HEK293 (cell line): ENCODE measurements at regions of chr6 and their contacts with region 1.

Region 1: DNA sequence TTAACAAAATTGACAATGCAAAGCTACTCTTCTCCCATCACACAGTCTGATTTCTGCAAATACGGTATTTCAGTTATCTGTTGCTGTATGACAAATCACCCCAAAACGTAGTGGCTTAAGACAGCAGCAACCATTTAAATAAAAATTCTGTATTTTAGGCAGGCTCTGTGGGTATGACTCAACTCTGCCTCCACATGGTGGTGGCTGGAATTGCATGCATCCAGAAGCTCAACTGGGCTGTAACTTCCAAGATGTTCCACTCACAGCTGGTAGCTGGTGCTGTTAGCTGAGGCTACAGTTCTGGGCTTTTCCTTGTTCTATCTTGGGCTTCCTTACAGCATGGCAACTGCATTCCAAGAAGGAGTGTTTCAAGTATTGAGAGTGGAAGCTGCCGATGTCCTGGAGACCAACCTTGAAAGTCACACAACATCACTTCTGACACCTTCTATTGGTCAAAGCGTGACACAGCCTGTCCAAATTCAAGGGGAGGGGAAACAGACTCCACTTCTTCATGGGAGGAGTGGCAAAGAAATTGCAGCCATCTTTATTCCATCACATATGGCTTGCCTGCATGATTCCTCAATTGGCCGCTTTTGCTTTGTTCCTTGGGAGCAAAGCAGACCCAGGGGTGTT is 39.7 kb upstream of the TULP1 start:
- H3K4me3 ChIP-seq: no peak overlapping the region
- H3K27ac ChIP-seq: no peak overlapping the region
- H3K4me1 ChIP-seq: no peaks in the 10 kb centered on the region
- CTCF ChIP-seq: peak; percentile 45

Region 2: DNA sequence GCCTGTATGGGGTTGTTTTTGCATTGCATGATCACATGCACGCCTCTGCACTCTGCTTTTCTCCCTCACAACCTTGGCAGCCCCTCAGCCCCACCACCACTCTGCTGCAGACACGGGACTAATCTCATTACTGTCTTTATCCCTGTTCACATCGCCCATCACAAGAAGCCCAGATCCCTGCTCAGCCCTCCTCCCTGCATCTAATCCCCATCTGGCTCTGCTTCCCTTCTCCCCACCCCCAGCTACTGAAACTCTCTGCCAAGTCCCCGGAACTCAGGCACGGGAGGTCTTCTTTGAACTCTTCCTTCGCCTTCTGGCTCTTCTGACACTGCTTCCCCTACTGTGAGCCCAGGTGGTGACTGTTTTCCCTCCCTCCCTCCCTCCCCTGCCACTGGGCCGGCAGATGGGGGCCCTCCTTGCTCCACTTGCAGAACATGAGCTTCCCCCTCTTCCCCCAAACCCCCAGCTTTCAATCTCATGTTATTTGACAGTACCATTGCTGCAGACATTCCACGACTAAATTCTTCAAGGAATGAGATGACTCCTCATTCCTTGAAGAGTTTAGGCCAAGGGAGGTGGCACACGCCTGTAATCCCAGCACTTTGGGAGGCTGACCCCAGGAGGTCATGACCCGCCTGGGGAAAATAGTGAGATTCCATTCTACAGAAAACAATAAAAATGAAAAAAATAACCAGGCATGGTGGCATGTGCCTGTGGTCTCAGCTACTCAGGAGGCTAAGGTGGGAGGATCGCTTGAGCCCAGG is 17.8 kb before region 1 on chr6:
- CTCF ChIA-PET with region 1: interaction called, 13 read pairs
- POLR2A ChIA-PET with region 1: interaction called, 3 read pairs
- H3K4me3 ChIP-seq: no peak overlapping the region
- H3K27ac ChIP-seq: no peak overlapping the region
- H3K4me1 ChIP-seq: no peaks in the 10 kb centered on the region
- CTCF ChIP-seq: no peak

Region 3: GRCh38 chr6:35569011-35569461 is 16.6 kb after region 1 on chr6:
- CTCF ChIA-PET with region 1: interaction called, 41 read pairs
- POLR2A ChIA-PET with region 1: no interaction called
- H3K4me3 ChIP-seq: no peak overlapping the region
- H3K27ac ChIP-seq: no peak overlapping the region
- H3K4me1 ChIP-seq: peaks cover 1% of the 10 kb centered on the region; the same call in 1 of the 2 replicates
- CTCF ChIP-seq: no peak; the same call in 1 of the 2 replicates

Region 4: DNA sequence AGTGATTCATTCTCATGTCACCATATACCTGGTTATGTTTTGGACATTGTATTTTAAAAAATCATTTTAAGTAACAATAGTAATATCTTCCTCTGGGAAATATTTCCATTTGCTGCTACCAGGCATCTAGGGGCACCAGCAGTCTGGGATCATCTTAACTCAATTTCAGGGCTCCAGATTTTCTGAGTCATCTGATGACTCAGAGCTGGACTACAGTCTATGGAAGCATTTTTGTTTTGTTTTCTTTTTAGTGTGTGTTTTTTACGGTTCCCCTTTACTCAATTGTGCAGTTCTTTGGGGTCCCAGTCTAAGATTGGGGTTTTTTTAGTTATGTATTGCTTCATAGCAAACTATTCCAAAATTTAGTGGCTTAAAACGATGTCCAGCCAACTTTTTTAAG is 142.1 kb after region 1 on chr6:
- CTCF ChIA-PET with region 1: no interaction called
- POLR2A ChIA-PET with region 1: no interaction called
- H3K4me3 ChIP-seq: no peak overlapping the region
- H3K27ac ChIP-seq: no peak overlapping the region
- H3K4me1 ChIP-seq: no peaks in the 10 kb centered on the region
- CTCF ChIP-seq: no peak